PC-9 (cell line): ENCODE measurements at regions of chr11 and their contacts with region 1.

Region 1: GRCh38 chr11:75248690-75249268 is 8.2 kb downstream of the TPBGL start:
- DNase-seq: peak; percentile 79 to 84
- H3K4me3 ChIP-seq: no peak overlapping the region
- H3K27ac ChIP-seq: no peak overlapping the region
- H3K4me1 ChIP-seq: no peaks in the 10 kb centered on the region
- H3K27me3 ChIP-seq: peaks cover 50% of the 10 kb centered on the region
- CTCF ChIP-seq: peak; percentile 99

Region 2: GRCh38 chr11:74929431-74930363 is 319.1 kb before region 1 on chr11:
- CTCF ChIA-PET with region 1: interaction called, 12 read pairs
- POLR2A ChIA-PET with region 1: no interaction called
- intact Hi-C with region 1: loop called (anchors 1 kb)
- DNase-seq: peak; percentile 55 to 72
- H3K4me3 ChIP-seq: no peak overlapping the region
- H3K27ac ChIP-seq: no peak overlapping the region
- H3K4me1 ChIP-seq: no peaks in the 10 kb centered on the region
- H3K27me3 ChIP-seq: no peaks in the 10 kb centered on the region
- CTCF ChIP-seq: peak; percentile 97

Region 3: DNA sequence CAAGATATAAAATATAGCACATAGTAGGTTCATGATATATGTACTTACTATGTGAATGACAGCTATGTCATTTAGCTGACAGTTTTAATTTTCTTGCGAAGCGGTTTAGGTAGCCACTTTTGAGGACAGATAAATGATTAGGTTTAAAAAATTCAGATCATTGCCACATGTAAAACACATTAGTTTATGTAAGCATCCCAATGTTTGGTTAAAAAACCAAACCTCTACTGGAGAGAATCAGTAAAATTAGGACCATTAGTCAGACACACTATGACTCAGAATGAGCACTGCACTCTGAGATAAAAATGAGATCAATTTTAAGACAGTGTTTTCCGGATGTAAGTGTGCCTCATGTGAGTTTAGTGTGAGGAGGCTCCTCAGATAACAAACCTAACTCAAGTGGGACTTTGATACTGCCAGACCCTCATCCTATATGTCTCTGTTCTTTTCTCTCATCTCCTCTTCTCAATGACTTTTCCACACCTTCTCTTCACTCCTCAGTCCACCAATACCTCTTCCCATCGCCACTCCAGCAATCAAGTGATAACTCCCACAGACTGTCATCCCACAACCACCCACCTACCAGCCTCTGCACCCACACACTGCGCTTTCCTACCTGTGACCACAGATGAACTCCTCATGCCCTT is 145.3 kb before region 1 on chr11:
- CTCF ChIA-PET with region 1: interaction called, 13 read pairs
- POLR2A ChIA-PET with region 1: no interaction called
- intact Hi-C with region 1: no loop called
- DNase-seq: no peak
- H3K4me3 ChIP-seq: no peak overlapping the region
- H3K27ac ChIP-seq: no peak overlapping the region
- H3K4me1 ChIP-seq: no peaks in the 10 kb centered on the region
- H3K27me3 ChIP-seq: no peaks in the 10 kb centered on the region
- CTCF ChIP-seq: no peak

Region 4: GRCh38 chr11:75204685-75205563 is 43.9 kb before region 1 on chr11:
- CTCF ChIA-PET with region 1: interaction called, 5 read pairs
- POLR2A ChIA-PET with region 1: no interaction called
- intact Hi-C with region 1: loop called (anchors 1 kb)
- DNase-seq: peak; percentile 60 to 80
- H3K4me3 ChIP-seq: no peak overlapping the region
- H3K27ac ChIP-seq: no peak overlapping the region
- H3K4me1 ChIP-seq: no peaks in the 10 kb centered on the region
- H3K27me3 ChIP-seq: peaks cover 75% of the 10 kb centered on the region
- CTCF ChIP-seq: peak; percentile 95